IMR-90 (cell line): ENCODE measurements at regions of chr12 and their contacts with region 1.

Region 1: DNA sequence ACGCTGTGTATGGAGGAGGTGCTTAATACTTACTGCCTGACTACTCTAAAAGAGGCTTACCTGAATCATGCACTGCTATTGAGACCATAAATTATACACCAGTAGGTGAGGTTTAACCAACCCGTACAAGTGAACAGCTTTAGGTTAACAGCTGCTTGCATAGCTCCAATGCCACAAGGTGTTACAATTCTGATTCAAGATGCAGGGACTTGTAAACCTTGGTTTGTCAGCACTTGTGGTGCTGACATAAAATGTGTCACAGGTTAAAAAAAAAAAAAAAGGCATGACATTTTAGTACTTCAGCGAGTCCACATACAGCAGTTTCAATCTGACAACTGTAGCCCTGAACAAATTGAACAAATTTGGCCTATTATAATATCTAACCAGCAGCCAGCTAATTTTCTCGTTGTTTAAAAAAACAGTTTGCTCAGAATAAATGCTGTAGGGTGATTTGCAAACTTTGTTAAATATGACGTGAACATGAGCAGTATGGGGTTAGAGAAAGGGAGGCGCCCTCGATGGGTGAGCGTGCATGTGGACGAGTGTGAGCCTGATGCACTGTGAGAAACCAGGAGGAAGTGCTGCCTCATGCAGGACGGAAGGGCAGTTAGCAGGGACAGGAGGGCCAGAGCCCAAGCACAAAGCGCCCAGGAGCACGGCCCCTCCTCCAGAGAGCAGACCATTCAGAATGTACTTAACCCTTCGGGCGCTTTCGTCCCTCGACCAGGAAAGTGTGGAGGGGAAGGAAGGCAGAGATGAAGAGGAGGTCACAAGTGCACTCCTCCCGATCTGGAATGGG is 44.7 kb downstream of the TCHP start:
- DNase-seq: peak; percentile 82
- ATAC-seq: peak; percentile 59
- H3K4me3 ChIP-seq: no peak overlapping the region
- H3K27ac ChIP-seq: peak overlapping the region; percentile 68
- H3K4me1 ChIP-seq: peaks cover 37% of the 10 kb centered on the region
- H3K27me3 ChIP-seq: no peaks in the 10 kb centered on the region
- CTCF ChIP-seq: peak; percentile 15; the same call in 1 of the 2 replicates
- POLR2A ChIP-seq: no peak
- RAD21 ChIP-seq: no peak

Region 2: GRCh38 chr12:109346920-109347319 is 597.8 kb before region 1 on chr12:
- CTCF ChIA-PET with region 1: no interaction called
- POLR2A ChIA-PET with region 1: no interaction called
- dilution Hi-C with region 1: no loop called
- in situ Hi-C with region 1: no loop called
- intact Hi-C with region 1: no loop called
- DNase-seq: no peak
- ATAC-seq: no peak
- H3K4me3 ChIP-seq: no peak overlapping the region
- H3K27ac ChIP-seq: no peak overlapping the region
- H3K4me1 ChIP-seq: no peaks in the 10 kb centered on the region
- H3K27me3 ChIP-seq: peaks cover 5% of the 10 kb centered on the region
- CTCF ChIP-seq: no peak
- POLR2A ChIP-seq: no peak
- RAD21 ChIP-seq: no peak

Region 3: DNA sequence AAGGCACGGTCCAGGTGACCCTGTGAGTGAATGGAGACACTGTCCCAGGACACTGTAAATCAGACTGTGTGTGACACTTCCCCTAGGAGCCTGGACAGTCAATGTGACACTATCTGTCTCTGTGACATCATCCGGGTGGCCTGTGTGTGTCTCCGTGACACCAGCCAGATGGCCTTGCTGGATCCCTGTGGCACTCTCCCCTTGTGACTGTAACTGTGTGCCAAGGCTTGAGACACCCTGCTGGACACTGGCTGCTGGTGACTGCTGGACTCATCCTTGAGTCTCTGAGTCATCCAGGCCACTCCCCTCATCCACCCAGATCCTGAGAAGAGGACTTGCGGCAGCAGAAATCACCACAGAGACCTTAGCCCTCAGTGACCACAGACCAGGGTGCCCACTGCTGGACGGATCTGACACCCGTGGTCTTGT is 319.6 kb before region 1 on chr12:
- CTCF ChIA-PET with region 1: no interaction called
- POLR2A ChIA-PET with region 1: no interaction called
- dilution Hi-C with region 1: no loop called
- in situ Hi-C with region 1: no loop called
- intact Hi-C with region 1: no loop called
- DNase-seq: peak; percentile 20
- ATAC-seq: peak; percentile 79
- H3K4me3 ChIP-seq: no peak overlapping the region
- H3K27ac ChIP-seq: no peak overlapping the region
- H3K4me1 ChIP-seq: no peaks in the 10 kb centered on the region
- H3K27me3 ChIP-seq: peaks cover 21% of the 10 kb centered on the region
- CTCF ChIP-seq: no peak
- POLR2A ChIP-seq: no peak
- RAD21 ChIP-seq: no peak

Region 4: GRCh38 chr12:109888179-109889020 is 56.4 kb before region 1 on chr12:
- CTCF ChIA-PET with region 1: no interaction called
- POLR2A ChIA-PET with region 1: no interaction called
- dilution Hi-C with region 1: no loop called
- in situ Hi-C with region 1: no loop called
- intact Hi-C with region 1: no loop called
- DNase-seq: peak; percentile 97
- ATAC-seq: peak; percentile 95
- H3K4me3 ChIP-seq: no peak overlapping the region
- H3K27ac ChIP-seq: peak overlapping the region; percentile 77
- H3K4me1 ChIP-seq: 0 out of 2 replicates have a peak, but pooled peaks cover 6% of the 10 kb centered on the region
- H3K27me3 ChIP-seq: no peaks in the 10 kb centered on the region; the same call in 1 of the 2 replicates
- CTCF ChIP-seq: no peak
- POLR2A ChIP-seq: no peak; the same call in 1 of the 2 replicates
- RAD21 ChIP-seq: no peak; the same call in 1 of the 2 replicates

Region 5: DNA sequence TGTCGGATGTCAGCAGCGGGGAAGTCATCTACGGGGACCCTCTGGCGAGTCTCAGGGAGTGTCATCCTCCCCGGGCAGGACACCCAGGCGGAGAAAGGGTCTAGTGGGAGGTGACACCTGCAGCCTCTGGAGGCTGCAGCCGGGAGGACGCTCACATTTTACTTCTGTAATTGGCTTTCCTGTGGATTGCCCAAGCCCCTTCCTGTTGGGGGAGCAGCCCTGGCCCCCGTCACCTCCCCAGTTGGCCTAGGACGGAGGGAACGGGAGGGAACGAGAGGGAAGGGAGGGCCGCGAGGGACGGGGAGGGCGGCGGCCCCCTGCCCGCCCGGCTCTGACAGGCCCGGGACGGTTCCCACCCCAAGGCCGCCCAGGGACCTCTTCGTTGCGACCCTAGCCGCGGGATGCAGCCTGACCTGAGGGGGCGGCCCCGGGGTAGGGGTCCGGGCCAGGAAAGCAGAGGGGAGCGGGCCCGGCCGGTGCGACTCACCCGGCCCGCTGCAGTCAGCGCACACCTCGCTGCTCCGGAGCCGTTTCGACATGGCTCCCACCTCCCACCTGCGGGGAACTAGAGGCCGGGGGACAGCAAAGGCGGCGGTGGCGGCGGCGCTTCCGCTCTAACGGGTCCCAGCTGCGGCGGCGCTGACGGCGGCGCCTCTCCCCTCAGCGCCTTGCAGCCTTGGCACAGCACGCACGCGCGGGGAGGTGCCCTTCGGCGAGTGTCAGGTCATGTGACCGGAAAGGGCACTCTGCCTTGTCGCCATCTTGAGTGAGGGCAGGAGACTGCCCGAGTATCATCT is 51.1 kb after region 1 on chr12 and contains the start of gene GIT2:
- CTCF ChIA-PET with region 1: interaction called, 6 read pairs
- POLR2A ChIA-PET with region 1: no interaction called
- dilution Hi-C with region 1: no loop called
- in situ Hi-C with region 1: no loop called
- intact Hi-C with region 1: loop called (anchors 5 kb)
- DNase-seq: peak; percentile 90
- ATAC-seq: peak; percentile 65
- H3K4me3 ChIP-seq: peak within 1 kb of the TSS; percentile 85
- H3K27ac ChIP-seq: peak within 1 kb of the TSS; percentile 90
- H3K4me1 ChIP-seq: peaks cover 7% of the 10 kb centered on the region; the same call in 1 of the 2 replicates
- H3K27me3 ChIP-seq: no peaks in the 10 kb centered on the region
- CTCF ChIP-seq: 0 out of 2 replicates have a peak, but pooled peaks have one; percentile 4
- POLR2A ChIP-seq: no peak
- RAD21 ChIP-seq: no peak
- total RNA-seq, gene GIT2: 60.5 and 71.9 TPM in 2 replicates

Region 6: DNA sequence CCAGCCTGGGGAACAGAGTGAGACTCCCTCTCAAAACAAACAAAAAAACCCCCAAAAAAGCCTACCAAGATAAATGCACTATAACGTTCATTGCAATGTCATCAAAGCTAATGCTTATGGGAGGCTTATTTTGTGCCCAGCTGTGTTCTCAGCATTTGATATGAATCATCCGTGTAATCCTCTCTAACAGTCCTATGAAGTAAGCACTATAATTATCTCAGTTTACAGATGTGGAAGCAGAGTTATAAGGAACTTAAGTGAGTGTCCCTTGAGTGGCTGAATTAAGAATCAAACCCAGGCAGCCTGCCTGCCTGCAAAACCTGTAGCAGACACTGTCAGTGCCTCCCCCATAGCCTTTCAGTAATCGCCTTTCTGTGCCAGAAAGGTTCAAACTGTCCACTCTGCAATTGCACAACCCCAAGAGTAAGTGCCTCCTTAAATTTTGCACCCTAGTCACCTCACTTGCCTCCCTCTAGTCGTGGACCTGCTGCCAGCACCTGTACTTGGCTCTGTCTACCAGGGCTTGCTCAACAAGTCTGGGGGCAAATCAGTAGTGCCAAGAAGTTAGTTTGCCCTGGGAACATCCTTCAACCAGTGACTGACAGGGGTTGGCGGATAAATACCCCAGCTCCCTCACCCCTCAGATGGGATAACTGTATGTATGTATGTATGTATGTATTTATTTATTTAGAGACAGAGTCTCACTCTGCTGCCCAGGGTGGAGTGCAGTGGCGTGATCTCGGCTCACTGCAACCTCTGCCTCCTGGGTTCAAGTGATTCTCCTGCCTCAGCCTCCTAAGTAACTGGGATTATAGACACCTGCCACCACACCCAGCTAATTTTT is 821.8 kb after region 1 on chr12:
- CTCF ChIA-PET with region 1: no interaction called
- POLR2A ChIA-PET with region 1: no interaction called
- dilution Hi-C with region 1: no loop called
- in situ Hi-C with region 1: no loop called
- intact Hi-C with region 1: no loop called
- DNase-seq: no peak
- ATAC-seq: no peak
- H3K4me3 ChIP-seq: no peak overlapping the region
- H3K27ac ChIP-seq: no peak overlapping the region
- H3K4me1 ChIP-seq: no peaks in the 10 kb centered on the region
- H3K27me3 ChIP-seq: peaks cover 2% of the 10 kb centered on the region; the same call in 1 of the 2 replicates
- CTCF ChIP-seq: no peak
- POLR2A ChIP-seq: no peak
- RAD21 ChIP-seq: no peak